Panc1 (cell line): ENCODE measurements at regions of chr5 and their contacts with region 1.

Region 1: DNA sequence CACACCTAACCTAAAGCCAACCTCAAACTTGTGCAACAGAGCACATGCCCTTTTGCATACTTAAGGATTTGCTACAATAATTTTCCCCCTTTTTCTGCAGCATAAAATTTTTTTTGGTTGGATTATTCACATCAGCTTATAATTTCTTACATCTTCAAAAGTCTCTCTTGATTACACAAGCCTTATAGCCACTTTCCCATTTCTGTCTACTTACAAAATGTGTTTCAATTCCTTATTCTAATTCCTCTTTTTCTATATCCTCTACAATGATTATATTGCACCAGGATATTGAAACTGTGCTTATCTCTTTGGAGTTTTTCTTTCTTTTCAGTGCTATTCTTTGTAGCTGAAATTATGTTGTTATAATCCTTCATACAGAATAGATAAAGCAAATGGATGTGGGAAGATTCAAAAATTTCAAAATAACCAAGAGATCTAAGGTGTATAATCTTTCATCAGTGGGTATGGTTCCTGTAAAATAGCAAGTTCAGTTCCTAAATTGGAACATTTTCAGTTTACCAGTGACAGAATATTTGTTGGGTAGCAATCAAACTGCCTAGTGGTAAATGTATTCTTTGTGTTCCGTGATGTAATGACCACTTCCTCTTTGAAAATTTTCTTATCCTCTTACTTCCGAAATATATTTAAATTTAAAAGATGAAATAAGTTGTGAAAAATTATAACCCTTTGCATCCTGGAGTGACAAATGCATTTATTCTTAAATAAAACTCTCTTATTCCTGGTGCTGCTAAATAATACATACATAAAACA is 386.8 kb upstream of the CHD1 start:
- DNase-seq: no peak
- ATAC-seq: no peak
- H3K4me3 ChIP-seq: no peak overlapping the region
- H3K27ac ChIP-seq: no peak overlapping the region
- H3K4me1 ChIP-seq: no peaks in the 10 kb centered on the region
- H3K27me3 ChIP-seq: no peaks in the 10 kb centered on the region
- CTCF ChIP-seq: no peak

Region 2: DNA sequence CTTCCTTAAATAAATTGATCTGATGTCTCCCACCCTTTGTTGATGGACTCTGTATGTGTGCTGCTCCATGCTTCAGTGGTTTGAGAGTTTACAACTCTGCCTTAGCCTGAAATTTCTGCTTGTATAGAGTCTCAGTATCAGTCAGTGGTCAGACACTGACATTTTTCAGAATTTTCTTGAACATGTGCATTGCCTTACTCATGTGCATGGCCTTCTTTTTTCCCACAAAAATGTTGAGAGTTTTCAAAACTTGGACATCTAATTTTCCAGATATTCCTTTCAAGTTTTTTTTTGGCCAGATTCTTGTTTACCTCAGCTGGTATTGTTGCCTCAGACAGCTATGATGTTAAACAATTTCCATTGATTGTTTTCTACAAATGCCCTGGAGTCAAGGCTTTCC is 40.3 kb after region 1 on chr5:
- CTCF ChIA-PET with region 1: no interaction called
- POLR2A ChIA-PET with region 1: no interaction called
- in situ Hi-C with region 1: no loop called
- intact Hi-C with region 1: loop called (anchors 1 kb)
- DNase-seq: no peak
- ATAC-seq: no peak
- H3K4me3 ChIP-seq: no peak overlapping the region
- H3K27ac ChIP-seq: no peak overlapping the region
- H3K4me1 ChIP-seq: no peaks in the 10 kb centered on the region
- H3K27me3 ChIP-seq: no peaks in the 10 kb centered on the region
- CTCF ChIP-seq: no peak

Region 3: GRCh38 chr5:99449786-99450185 is 134.2 kb after region 1 on chr5:
- CTCF ChIA-PET with region 1: no interaction called
- POLR2A ChIA-PET with region 1: no interaction called
- in situ Hi-C with region 1: no loop called
- intact Hi-C with region 1: no loop called
- DNase-seq: no peak
- ATAC-seq: no peak
- H3K4me3 ChIP-seq: no peak overlapping the region
- H3K27ac ChIP-seq: no peak overlapping the region
- H3K4me1 ChIP-seq: no peaks in the 10 kb centered on the region
- H3K27me3 ChIP-seq: no peaks in the 10 kb centered on the region
- CTCF ChIP-seq: no peak